Stomach (tissue), 19 donors: ENCODE measurements at regions of chr2 and their contacts with region 1.

Region 1: DNA sequence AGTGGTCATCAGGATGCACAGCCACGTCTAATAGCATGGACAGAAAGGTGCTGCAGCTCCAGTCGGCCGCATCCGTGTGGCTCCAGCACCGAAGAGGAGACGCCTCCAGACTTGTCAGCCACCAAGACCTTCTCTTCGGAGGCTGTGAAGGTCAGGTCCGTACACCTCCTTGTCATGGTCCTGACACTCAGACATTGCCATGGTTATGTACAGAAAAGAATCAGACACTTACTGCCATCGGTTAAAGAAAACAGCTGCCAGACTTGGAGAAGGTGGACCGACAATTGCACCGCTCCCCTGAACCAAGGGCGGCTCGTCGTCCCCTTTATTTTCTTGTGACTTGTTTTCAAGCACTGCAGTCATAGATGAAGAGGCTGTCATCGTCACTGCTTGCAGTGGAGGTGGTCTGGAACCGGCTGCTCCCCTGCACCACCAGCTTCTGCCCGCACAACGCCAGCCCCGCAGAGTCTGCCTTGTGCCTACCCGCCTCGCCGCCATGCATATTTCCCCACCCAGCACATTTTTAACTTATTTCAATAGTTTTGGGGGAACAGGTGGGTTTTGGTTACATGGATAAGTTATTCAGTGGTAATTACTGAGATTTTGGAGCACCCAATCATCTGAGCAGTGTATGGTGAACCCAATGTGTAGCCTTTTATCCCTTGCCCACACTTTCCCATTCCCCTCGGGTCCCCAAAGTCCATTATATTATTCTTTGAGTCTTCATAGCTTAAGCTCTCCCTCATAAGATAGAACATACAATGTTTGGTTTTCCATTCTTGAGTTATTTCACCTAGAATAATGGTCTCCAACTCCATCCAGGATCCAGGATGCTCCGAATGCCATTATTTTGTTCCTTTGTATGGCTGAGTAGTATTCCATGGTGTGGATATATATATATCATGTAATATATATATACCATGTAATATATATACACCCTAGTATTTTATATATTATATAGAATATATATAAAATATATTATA is 18.1 kb downstream of the FBXO48 start:
- DNase-seq: no peak
- H3K4me3 ChIP-seq: no peak overlapping the region
- H3K27ac ChIP-seq: no peak overlapping the region
- H3K4me1 ChIP-seq: no peaks in the 10 kb centered on the region
- H3K27me3 ChIP-seq: no peaks in the 10 kb centered on the region
- CTCF ChIP-seq: no peak
- EP300 ChIP-seq: no peak
- POLR2A ChIP-seq: no peak

Region 2: GRCh38 chr2:68203587-68203986 is 245.4 kb before region 1 on chr2:
- intact Hi-C with region 1: no loop called
- DNase-seq: no peak
- H3K4me3 ChIP-seq: no peak overlapping the region
- H3K27ac ChIP-seq: peak overlapping the region in 1 of 5 donors; percentile 27
- H3K4me1 ChIP-seq: peaks cover 12 to 72% (median 38%) of the 10 kb centered on the region in 4 donors
- H3K27me3 ChIP-seq: no peaks in the 10 kb centered on the region
- CTCF ChIP-seq: no peak
- EP300 ChIP-seq: no peak
- POLR2A ChIP-seq: no peak

Region 3: DNA sequence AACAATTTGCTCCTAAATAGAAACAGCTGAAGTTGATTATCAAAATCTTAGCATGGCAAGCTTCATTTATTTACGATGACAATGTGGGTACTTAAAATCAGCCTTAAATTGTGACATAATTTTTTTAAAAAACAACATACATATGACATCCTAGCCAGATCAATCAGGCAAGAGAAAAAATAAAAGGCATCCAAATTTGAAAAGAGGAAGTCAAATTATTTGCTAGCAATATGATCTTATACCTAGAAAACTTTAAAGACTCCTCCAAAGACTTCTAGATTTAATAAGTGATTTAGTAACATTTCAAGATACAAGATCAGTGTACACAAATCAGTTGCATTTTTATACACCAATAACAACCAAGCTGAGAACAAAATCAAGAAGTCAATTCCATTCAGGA is 182.3 kb before region 1 on chr2:
- intact Hi-C with region 1: loop called (anchors 5 kb)
- DNase-seq: no peak
- H3K4me3 ChIP-seq: no peak overlapping the region
- H3K27ac ChIP-seq: no peak overlapping the region
- H3K4me1 ChIP-seq: no peaks in the 10 kb centered on the region
- H3K27me3 ChIP-seq: no peaks in the 10 kb centered on the region
- CTCF ChIP-seq: no peak
- EP300 ChIP-seq: no peak
- POLR2A ChIP-seq: no peak

Region 4: GRCh38 chr2:68362069-68362468 is 86.9 kb before region 1 on chr2:
- intact Hi-C with region 1: loop called (anchors 5 kb)
- DNase-seq: peak; percentile 78 to 83
- H3K4me3 ChIP-seq: peak overlapping the region in 1 of 4 donors; percentile 13
- H3K27ac ChIP-seq: peak overlapping the region in 1 of 5 donors; percentile 10
- H3K4me1 ChIP-seq: peaks cover 0 to 6% (median 2%) of the 10 kb centered on the region in 4 donors
- H3K27me3 ChIP-seq: no peaks in the 10 kb centered on the region
- CTCF ChIP-seq: peak in 5 of 7 experiments; percentile 42 to 80 (median 59)
- EP300 ChIP-seq: no peak
- POLR2A ChIP-seq: no peak